ENCODE measurements at regions of chr11 and their contacts with region 1.

Region 1: GRCh38 chr11:63832336-63832735 is 6.6 kb upstream of the MARK2 start:
- DNase-seq: no peak
- ATAC-seq: no peak
- H3K4me3 ChIP-seq: no peak overlapping the region
- H3K27ac ChIP-seq: no peak overlapping the region
- H3K4me1 ChIP-seq: peaks cover 2% of the 10 kb centered on the region
- H3K27me3 ChIP-seq: no peaks in the 10 kb centered on the region
- CTCF ChIP-seq: no peak

Region 2: GRCh38 chr11:63951779-63952536 is 119.6 kb after region 1 on chr11:
- CTCF ChIA-PET with region 1: no interaction called
- POLR2A ChIA-PET with region 1: interaction called, 18 read pairs
- in situ Hi-C with region 1: no loop called
- intact Hi-C with region 1: no loop called
- DNase-seq: no peak
- ATAC-seq: no peak
- H3K4me3 ChIP-seq: no peak overlapping the region
- H3K27ac ChIP-seq: no peak overlapping the region
- H3K4me1 ChIP-seq: no peaks in the 10 kb centered on the region
- H3K27me3 ChIP-seq: no peaks in the 10 kb centered on the region
- CTCF ChIP-seq: no peak

Measured in Panc1 (cell line).